ENCODE measurements at regions of chr13 and their contacts with region 1.

Region 1: DNA sequence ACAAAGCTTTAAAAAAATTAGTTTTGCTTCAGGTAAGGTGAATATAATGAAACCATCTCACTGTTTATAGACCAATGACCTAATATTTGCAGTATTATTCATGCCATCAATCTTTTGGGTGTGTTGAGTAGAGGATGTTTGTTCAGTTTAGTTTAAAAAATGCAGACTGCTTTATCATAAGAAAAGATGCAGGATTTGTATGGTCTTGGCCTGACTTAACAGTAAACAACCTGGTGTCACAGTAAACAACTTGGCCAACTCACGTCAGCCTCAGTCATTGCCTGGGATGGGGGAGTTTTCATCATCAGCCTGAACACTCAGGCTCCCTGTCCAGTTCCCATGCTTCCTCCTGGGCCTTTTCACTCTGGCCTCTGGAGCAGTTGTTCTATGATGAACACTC is 55.1 kb downstream of the LMO7 start:
- H3K4me3 Mint-ChIP-seq: no peak overlapping the region
- H3K27ac Mint-ChIP-seq: no peak overlapping the region
- H3K4me1 Mint-ChIP-seq: no peaks in the 10 kb centered on the region
- H3K27me3 Mint-ChIP-seq: no peaks in the 10 kb centered on the region

Region 2: DNA sequence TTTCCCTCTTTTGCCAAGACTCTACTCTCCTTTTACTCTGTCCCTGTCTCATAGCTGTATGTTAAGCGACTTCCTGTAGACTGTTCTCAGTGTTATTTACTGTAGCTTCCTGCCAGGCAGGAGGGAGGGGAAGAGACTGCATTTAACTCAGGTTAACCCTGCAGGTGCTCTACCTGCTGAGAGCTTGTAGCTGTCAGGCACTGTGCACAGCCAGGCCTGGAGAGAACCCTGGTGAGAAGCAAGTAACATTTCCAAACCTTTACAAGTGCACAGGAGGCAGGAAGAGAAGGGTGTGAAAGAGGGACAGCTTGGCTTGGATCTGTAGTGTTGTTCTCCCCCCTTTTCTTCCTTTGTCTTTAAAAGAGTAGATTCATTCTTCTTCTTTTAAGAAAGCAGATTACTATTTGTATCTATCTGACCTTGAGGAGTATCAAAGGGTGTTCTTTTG is 112.0 kb after region 1 on chr13:
- intact Hi-C with region 1: no loop called
- H3K4me3 Mint-ChIP-seq: no peak overlapping the region
- H3K27ac Mint-ChIP-seq: no peak overlapping the region
- H3K4me1 Mint-ChIP-seq: no peaks in the 10 kb centered on the region
- H3K27me3 Mint-ChIP-seq: no peaks in the 10 kb centered on the region

Region 3: DNA sequence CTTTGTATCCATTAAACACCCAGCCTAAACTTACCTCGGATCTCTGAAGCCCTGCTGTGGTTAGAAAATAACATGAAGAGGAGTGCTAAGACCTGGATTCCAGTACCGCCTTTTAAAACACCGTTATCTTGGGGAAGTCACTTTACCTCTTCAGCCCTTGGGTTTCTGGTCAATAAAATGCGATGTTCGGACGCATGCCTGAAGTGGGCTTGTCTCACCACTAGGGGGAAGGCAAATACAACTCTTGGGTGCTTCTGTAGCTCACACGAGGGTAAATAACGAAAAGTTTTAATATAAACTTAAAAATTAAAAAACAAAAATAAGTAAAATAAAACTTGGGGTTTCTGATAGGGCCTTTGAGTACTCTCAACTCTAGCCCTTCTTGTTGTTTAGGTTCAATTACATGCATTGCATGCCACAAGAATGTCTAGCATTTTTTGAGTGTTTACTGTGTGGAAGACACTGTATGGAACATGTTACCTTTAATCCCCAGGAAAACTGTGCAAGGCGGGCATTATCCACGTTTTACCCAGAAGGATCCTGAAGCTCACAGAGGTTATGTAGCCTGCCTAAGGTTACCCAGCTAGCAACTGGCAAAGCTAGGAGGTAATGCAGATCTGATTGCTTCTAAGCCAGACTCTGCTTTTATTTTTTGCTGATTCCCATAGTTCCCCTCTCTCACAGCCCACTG is 185.3 kb after region 1 on chr13:
- intact Hi-C with region 1: loop called (anchors 10 kb)
- H3K4me3 Mint-ChIP-seq: no peak overlapping the region
- H3K27ac Mint-ChIP-seq: no peak overlapping the region
- H3K4me1 Mint-ChIP-seq: peaks cover 41% of the 10 kb centered on the region
- H3K27me3 Mint-ChIP-seq: peaks cover 14% of the 10 kb centered on the region